ENCODE measurements at regions of chr16 and their contacts with region 1.

Region 1: GRCh38 chr16:89167425-89167941 is 4.1 kb upstream of the CDH15 start:
- DNase-seq: peak; percentile 77 to 83
- ATAC-seq: peak; percentile 44 to 74
- H3K4me3 ChIP-seq: no peak overlapping the region
- H3K27ac ChIP-seq: peak overlapping the region; percentile 71 to 80
- H3K4me1 ChIP-seq: peaks cover 21% of the 10 kb centered on the region
- CTCF ChIP-seq: peak; percentile 90
- EP300 ChIP-seq: no peak
- POLR2A ChIP-seq: no peak
- RAD21 ChIP-seq: peak; percentile 96 to 98

Region 2: DNA sequence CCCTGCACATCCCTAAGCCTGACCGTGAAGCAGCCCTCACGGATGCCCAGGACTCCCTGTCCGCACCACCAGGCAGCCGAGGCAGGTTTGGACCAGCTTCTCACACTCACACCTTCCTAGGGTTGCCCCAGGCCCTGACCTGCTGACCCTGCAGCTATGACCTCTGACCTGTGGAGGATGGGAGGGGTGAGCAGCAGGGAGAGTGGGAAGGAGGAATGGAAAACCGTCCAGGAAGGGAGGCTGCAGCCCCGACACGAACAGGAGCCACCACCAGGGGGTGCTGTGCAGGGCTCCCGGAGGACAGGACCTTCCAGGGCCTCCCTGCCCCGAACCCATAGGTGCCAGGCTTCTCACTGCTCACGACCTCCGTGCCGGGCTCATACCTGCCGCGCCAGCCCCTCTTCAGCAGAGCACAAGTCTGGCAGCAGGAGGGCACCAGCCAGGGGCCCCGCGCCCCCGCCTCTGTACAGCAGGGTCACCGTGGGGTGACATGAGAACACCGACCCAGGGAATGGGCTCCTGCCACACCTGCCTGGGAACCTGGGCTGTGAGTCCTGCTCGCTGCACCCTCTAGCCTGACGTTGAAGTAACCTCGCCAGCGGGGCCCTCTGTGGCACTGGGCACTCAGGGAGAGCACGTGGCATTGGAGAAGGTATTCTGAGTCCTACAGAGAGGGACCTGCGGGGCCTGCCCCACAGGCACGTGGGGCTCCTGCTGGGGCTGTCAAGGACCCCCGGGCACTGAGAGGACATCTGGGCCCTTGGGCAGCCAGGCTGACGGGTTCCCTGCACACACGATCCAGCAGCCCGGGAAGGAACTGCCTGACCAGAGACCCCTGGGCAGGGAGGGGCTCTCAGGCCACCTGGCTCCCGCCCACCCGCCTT is 423.5 kb before region 1 on chr16:
- CTCF ChIA-PET with region 1: interaction called, 14 read pairs
- POLR2A ChIA-PET with region 1: no interaction called
- DNase-seq: peak; percentile 77 to 83
- ATAC-seq: peak; percentile 73 to 85
- H3K4me3 ChIP-seq: no peak overlapping the region
- H3K27ac ChIP-seq: no peak overlapping the region
- H3K4me1 ChIP-seq: peaks cover 4% of the 10 kb centered on the region; the same call in 2 of the 3 replicates
- CTCF ChIP-seq: peak; percentile 85
- EP300 ChIP-seq: no peak
- POLR2A ChIP-seq: no peak
- RAD21 ChIP-seq: peak; percentile 47 to 50; a peak in 4 of 5 replicates

Region 3: DNA sequence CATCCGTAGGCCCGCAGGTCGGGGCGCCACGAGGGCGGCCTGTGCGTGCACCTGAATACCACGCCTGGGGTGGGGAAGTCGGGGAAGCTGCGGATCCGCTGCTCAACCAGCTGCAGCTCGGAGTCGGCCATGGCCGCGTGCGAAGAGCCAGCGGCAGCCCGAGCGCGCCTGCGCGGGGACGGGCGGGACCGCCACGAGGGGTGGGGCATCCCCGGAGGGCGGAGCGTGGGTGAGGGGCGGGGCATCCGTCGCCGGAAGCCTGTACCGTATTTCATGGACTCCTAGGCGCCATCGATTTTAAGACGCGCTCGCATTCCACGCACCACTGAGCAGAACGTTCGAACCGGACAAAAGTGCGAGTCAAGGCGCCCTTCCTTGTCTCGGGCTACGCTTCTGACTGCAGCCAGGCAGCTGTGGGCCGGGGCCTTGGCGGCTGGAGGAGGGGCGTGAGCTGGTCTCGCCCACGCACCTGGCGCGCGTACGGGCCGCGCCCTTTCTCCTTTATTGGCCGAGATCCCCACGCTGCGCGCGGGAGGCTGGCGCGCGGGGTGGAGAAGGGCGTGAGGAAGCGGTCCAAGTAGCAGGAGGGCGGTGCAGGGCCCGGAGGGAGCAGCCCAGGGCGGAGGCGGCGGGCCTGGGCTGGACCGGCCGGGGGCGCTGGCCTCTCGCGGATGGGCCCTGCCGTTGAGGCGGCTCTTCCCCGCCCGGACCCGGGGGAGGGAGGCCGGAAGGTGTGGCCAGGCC is 355.5 kb before region 1 on chr16 and contains the start of gene APRT:
- CTCF ChIA-PET with region 1: interaction called, 23 read pairs
- POLR2A ChIA-PET with region 1: no interaction called
- DNase-seq: peak; percentile 78 to 95
- ATAC-seq: peak; percentile 64 to 74
- H3K4me3 ChIP-seq: peak within 1 kb of the TSS; percentile 83
- H3K27ac ChIP-seq: peak within 1 kb of the TSS; percentile 98 to 99
- H3K4me1 ChIP-seq: peaks cover 21% of the 10 kb centered on the region
- CTCF ChIP-seq: peak; percentile 33; the same call in 2 of the 3 replicates
- EP300 ChIP-seq: no peak
- POLR2A ChIP-seq: peak; percentile 83
- RAD21 ChIP-seq: peak; percentile 31 to 44; a peak in 3 of 5 replicates
- polyA plus RNA-seq, gene APRT: 113 and 115 TPM in 2 replicates

Region 4: DNA sequence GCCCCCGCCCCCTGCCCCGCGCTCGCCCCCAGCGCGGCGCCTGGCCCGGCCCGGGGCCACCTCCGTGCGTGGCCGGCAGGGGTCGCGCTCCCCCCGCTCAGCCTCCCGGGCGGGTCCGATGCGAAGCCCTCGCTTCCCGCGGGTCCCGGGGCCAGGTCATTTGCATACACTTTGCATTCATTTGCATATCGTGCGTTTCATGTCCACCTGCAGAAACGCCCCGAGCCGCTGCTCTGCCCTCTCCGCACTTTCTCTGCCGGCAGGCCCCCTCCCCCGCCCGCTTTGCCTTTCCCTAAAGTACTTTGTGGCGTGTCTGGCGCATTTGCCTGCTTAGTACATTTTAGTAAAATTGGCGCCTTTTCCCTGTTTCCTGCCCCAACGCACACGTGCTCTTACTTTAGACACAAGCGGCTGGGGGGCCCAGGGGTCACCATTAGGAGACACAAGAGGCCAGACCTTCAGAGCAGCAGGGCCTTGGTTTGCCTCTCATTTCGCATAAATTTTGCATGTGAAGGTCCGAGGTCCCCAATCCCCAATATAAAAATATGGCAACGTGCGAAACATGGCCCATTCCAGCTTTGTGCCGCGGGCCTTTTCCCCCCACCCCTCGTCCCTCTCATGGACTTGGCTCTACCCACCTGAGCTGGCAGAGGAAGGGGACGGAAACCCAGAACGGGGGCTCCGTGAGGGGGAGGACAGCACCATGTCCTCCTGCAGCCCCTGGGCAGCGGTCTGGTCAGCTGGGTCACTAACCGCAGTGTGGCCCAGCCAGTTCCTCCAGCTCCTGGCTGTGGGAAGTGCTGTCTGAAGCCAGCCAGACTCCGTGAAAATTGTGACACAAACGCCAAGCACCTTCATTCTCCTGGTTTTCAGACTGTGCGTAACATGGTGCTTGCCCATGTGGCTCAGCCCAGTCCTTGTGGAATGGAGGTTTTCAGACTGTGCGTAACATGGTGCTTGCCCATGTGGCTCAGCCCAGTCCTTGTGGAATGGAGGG is 225.3 kb before region 1 on chr16:
- CTCF ChIA-PET with region 1: interaction called, 20 read pairs
- POLR2A ChIA-PET with region 1: no interaction called
- DNase-seq: peak; percentile 29 to 81
- ATAC-seq: peak; percentile 72 to 80
- H3K4me3 ChIP-seq: peak overlapping the region; percentile 80
- H3K27ac ChIP-seq: peak overlapping the region; percentile 58 to 79; a peak in 5 of 6 replicates
- H3K4me1 ChIP-seq: 0 out of 3 replicates have a peak, but pooled peaks cover 6% of the 10 kb centered on the region
- CTCF ChIP-seq: peak; percentile 92
- EP300 ChIP-seq: no peak
- POLR2A ChIP-seq: no peak
- RAD21 ChIP-seq: peak; percentile 68 to 84

Region 5: GRCh38 chr16:88948781-88949490 is 218.5 kb before region 1 on chr16:
- CTCF ChIA-PET with region 1: interaction called, 20 read pairs
- POLR2A ChIA-PET with region 1: no interaction called
- DNase-seq: peak in 1 of 2 experiments; percentile 32
- ATAC-seq: peak; percentile 55 to 66; a peak in 3 of 6 replicates
- H3K4me3 ChIP-seq: no peak overlapping the region
- H3K27ac ChIP-seq: no peak overlapping the region
- H3K4me1 ChIP-seq: no peaks in the 10 kb centered on the region
- CTCF ChIP-seq: peak; percentile 21; the same call in 1 of the 3 replicates
- EP300 ChIP-seq: no peak
- POLR2A ChIP-seq: no peak
- RAD21 ChIP-seq: 0 out of 5 replicates have a peak, but pooled peaks of 1 of the 2 experiments have one; percentile 8

Region 6: DNA sequence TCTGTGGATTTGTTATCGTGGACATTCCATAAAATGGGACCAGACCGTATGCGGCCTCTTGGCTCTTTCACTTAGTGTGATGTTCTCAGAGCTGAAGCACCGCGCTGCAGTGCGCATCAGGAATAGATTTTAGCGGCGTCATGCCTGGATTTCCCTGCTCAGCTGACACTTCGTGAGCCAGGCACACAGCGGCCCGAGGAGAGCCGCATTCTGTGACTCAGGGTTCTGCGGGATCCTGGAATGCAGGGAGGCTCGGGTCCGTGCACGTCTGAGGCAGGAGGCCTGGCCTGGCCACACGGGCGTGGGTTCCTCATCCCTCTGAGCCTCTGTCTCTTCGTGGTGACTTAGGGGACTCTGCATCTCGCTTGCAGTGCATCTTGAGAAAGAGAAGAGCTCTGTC is 203.9 kb before region 1 on chr16:
- CTCF ChIA-PET with region 1: no interaction called
- POLR2A ChIA-PET with region 1: no interaction called
- DNase-seq: no peak
- ATAC-seq: peak in 1 of 2 experiments; percentile 30; a peak in 2 of 6 replicates
- H3K4me3 ChIP-seq: no peak overlapping the region
- H3K27ac ChIP-seq: no peak overlapping the region
- H3K4me1 ChIP-seq: no peaks in the 10 kb centered on the region
- CTCF ChIP-seq: no peak
- EP300 ChIP-seq: no peak
- POLR2A ChIP-seq: no peak
- RAD21 ChIP-seq: no peak

Region 7: GRCh38 chr16:89060207-89060794 is 107.2 kb before region 1 on chr16:
- CTCF ChIA-PET with region 1: no interaction called
- POLR2A ChIA-PET with region 1: no interaction called
- DNase-seq: no peak
- ATAC-seq: no peak
- H3K4me3 ChIP-seq: no peak overlapping the region
- H3K27ac ChIP-seq: no peak overlapping the region
- H3K4me1 ChIP-seq: no peaks in the 10 kb centered on the region
- CTCF ChIP-seq: no peak
- EP300 ChIP-seq: no peak
- POLR2A ChIP-seq: no peak
- RAD21 ChIP-seq: no peak

Region 8: DNA sequence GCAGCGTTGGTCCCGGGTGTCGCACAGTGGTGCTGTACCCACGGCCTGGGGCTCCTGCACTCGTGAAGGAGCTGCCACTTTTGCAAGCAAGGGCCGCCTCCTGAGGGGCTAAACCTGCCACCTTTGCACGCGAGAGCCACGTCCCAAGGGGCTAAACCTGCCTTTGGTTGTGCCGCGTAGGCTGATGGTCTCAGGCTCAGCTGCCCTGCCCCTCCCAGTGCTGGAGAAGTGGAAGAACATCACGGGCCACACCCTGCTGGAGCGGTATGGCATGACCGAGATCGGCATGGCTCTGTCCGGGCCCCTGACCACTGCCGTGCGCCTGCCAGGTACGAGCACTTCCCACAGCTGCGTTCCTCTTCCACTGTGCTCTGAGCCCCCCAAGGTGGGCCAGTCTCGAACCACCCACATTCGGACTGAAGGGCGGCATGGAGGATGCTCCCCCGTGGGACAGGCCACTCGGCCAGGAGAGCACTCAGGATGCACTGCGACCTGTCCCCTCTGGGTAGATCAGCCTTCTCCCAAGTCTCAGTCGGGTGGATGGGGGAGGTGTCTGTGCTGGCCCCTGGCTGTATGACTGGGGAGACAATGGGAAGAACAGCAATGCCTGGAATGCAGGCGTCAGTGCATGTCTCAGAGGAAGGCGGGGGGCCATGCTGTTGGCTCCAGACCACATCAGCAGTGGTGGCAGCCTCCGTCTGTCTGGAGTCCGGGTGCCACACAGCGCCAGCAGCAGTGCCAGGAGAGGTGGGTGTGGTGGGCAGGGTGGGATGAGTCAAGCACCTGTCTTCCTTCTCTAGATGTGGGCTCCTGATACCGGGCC is 53.1 kb before region 1 on chr16:
- CTCF ChIA-PET with region 1: no interaction called
- POLR2A ChIA-PET with region 1: no interaction called
- DNase-seq: no peak
- ATAC-seq: no peak
- H3K4me3 ChIP-seq: no peak overlapping the region
- H3K27ac ChIP-seq: no peak overlapping the region
- H3K4me1 ChIP-seq: no peaks in the 10 kb centered on the region
- CTCF ChIP-seq: no peak
- EP300 ChIP-seq: no peak
- POLR2A ChIP-seq: no peak
- RAD21 ChIP-seq: no peak

Region 9: DNA sequence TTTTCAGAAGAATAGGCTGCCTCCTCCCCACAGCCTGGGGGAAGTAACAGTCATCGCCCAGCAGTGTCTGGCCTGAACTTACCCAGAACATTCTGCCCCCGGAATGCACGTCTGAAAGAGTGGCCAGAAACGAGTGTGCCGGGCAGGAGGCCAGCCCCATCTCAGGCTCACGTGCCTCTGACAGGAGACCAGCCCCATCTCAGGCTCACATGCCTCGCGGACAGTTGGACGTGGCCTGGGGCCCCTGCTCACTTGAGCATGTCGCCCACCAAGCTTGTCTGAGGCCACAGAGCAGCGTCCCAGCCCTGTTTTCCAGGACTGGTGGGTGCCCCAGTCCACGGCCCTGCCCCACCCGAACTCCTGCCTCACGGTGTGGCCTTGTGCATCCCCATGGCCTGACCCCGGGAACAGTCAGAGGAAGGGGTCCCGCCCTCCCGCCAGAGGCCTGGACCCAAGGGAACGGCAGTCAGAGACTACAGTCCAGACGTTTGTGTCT is 12.3 kb before region 1 on chr16:
- CTCF ChIA-PET with region 1: interaction called, 21 read pairs
- POLR2A ChIA-PET with region 1: no interaction called
- DNase-seq: no peak
- ATAC-seq: peak in 1 of 2 experiments; percentile 15; a peak in 2 of 6 replicates
- H3K4me3 ChIP-seq: no peak overlapping the region
- H3K27ac ChIP-seq: no peak overlapping the region
- H3K4me1 ChIP-seq: no peaks in the 10 kb centered on the region
- CTCF ChIP-seq: no peak
- EP300 ChIP-seq: no peak
- POLR2A ChIP-seq: no peak
- RAD21 ChIP-seq: no peak

Measured in A549 (cell line).